GM12878 (cell line): ENCODE measurements at regions of chr7 and their contacts with region 1.

Region 1: DNA sequence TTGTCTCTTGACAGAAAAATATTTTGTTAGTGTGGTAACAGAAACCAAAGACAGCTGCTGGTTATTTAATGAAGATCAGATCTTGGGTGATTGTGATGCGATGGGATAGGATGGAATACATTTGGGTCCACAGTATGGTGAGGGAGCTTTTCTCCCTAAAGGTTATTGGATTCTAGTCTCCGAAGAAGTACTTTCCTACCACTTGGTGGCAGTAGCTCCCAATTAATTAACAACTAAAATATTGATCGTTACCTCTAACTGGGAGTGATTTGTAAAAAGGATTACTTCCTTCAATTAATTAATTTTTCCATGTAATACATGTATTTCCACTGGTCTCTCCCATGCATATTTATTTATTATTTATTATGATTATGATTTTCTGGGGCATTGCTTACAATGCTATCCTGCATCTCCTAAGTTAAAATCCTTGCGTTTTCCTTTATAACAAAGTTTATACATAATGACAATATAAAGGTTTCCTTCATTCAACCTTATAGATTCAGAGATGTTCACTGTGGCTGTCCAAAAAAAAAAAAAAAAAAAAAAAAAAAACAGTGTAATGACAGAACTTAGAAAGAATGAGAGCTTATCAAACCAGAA is 25.6 kb downstream of the TMEM196 start:
- DNase-seq: no peak
- ATAC-seq: peak; percentile 76
- H3K4me3 ChIP-seq: no peak overlapping the region
- H3K27ac ChIP-seq: no peak overlapping the region
- H3K4me1 ChIP-seq: no peaks in the 10 kb centered on the region
- H3K27me3 ChIP-seq: no peaks in the 10 kb centered on the region
- CTCF ChIP-seq: peak; percentile 47 to 61 (median 47); a peak in 5 of 6 replicates
- EP300 ChIP-seq: no peak
- POLR2A ChIP-seq: no peak
- RAD21 ChIP-seq: peak; percentile 63

Region 2: GRCh38 chr7:19708397-19709248 is 39.2 kb before region 1 on chr7 and contains the start of gene POLR1F:
- CTCF ChIA-PET with region 1: interaction called, 61 read pairs
- POLR2A ChIA-PET with region 1: no interaction called
- RAD21 ChIA-PET with region 1: interaction called, 23 read pairs
- SMC1A ChIA-PET with region 1: interaction called, 30 read pairs
- in situ Hi-C with region 1: no loop called
- intact Hi-C with region 1: no loop called
- DNase-seq: peak; percentile 90
- ATAC-seq: peak; percentile 95
- H3K4me3 ChIP-seq: peak within 1 kb of the TSS; percentile 90
- H3K27ac ChIP-seq: peak within 1 kb of the TSS; percentile 62
- H3K4me1 ChIP-seq: 0 out of 2 replicates have a peak, but pooled peaks cover 3% of the 10 kb centered on the region
- H3K27me3 ChIP-seq: no peaks in the 10 kb centered on the region
- CTCF ChIP-seq: peak; percentile 92 to 98 (median 97); a peak in 5 of 6 replicates
- EP300 ChIP-seq: 0 out of 4 replicates have a peak, but pooled peaks of 1 of the 2 experiments have one; percentile 33
- POLR2A ChIP-seq: peak; percentile 99
- RAD21 ChIP-seq: peak; percentile 59
- polyA plus RNA-seq, gene POLR1F: 95.3 to 129 TPM

Region 3: DNA sequence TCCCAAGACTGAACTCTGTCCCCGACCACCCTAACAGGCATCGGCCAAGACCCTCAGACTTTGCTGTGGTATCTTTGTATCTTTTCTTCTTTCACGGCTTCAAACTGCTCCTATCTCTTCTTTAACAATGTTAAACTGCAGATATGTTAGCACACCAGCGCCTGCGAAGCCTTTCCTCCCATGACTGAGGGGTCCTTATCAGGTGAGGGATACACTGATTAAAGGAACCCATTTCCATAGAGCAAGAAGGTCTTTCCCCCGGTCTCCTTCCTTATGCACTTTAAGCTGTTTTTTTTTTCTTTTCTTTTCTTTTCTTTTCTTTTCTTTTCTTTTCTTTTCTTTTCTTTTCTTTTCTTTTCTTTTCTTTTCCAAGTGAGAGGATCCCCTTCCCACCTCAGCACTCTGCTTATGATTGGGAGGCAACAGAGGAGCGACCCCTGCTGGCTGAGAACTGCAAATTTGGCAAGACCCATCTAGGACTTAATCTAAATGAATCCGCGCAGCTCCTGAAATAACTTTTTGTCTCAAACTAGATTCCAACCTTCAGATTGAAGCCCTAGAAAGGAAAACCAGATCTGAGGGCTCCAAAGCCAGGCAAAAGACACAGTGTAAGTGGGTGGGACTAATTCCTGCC is 692.7 kb after region 1 on chr7:
- CTCF ChIA-PET with region 1: interaction called, 6 read pairs
- POLR2A ChIA-PET with region 1: no interaction called
- RAD21 ChIA-PET with region 1: interaction called, 9 read pairs
- SMC1A ChIA-PET with region 1: interaction called, 3 read pairs
- in situ Hi-C with region 1: no loop called
- intact Hi-C with region 1: loop called (anchors 10 kb)
- DNase-seq: no peak
- ATAC-seq: peak; percentile 35; the same call in 1 of the 3 replicates
- H3K4me3 ChIP-seq: no peak overlapping the region
- H3K27ac ChIP-seq: no peak overlapping the region
- H3K4me1 ChIP-seq: peaks cover 15% of the 10 kb centered on the region; the same call in 1 of the 2 replicates
- H3K27me3 ChIP-seq: no peaks in the 10 kb centered on the region
- CTCF ChIP-seq: peak; percentile 34 to 65 (median 58)
- EP300 ChIP-seq: no peak
- POLR2A ChIP-seq: no peak
- RAD21 ChIP-seq: peak; percentile 60

Region 4: GRCh38 chr7:20598459-20599309 is 850.8 kb after region 1 on chr7:
- CTCF ChIA-PET with region 1: interaction called, 116 read pairs
- POLR2A ChIA-PET with region 1: no interaction called
- RAD21 ChIA-PET with region 1: interaction called, 86 read pairs
- SMC1A ChIA-PET with region 1: interaction called, 67 read pairs
- in situ Hi-C with region 1: loop called (anchors 5 kb)
- intact Hi-C with region 1: loop called (anchors 1 kb)
- DNase-seq: peak; percentile 43
- ATAC-seq: peak; percentile 88
- H3K4me3 ChIP-seq: no peak overlapping the region
- H3K27ac ChIP-seq: no peak overlapping the region
- H3K4me1 ChIP-seq: no peaks in the 10 kb centered on the region
- H3K27me3 ChIP-seq: no peaks in the 10 kb centered on the region
- CTCF ChIP-seq: peak; percentile 69 to 91 (median 84)
- EP300 ChIP-seq: no peak
- POLR2A ChIP-seq: no peak
- RAD21 ChIP-seq: peak; percentile 98

Region 5: GRCh38 chr7:20647908-20648776 is 900.3 kb after region 1 on chr7:
- CTCF ChIA-PET with region 1: interaction called, 24 read pairs
- POLR2A ChIA-PET with region 1: no interaction called
- RAD21 ChIA-PET with region 1: interaction called, 4 read pairs
- SMC1A ChIA-PET with region 1: interaction called, 3 read pairs
- in situ Hi-C with region 1: no loop called
- intact Hi-C with region 1: loop called (anchors 5 kb)
- DNase-seq: no peak
- ATAC-seq: peak; percentile 85
- H3K4me3 ChIP-seq: no peak overlapping the region
- H3K27ac ChIP-seq: no peak overlapping the region
- H3K4me1 ChIP-seq: no peaks in the 10 kb centered on the region
- H3K27me3 ChIP-seq: no peaks in the 10 kb centered on the region
- CTCF ChIP-seq: peak; percentile 44 to 54 (median 48); a peak in 5 of 6 replicates
- EP300 ChIP-seq: no peak
- POLR2A ChIP-seq: no peak
- RAD21 ChIP-seq: peak; percentile 31; the same call in 1 of the 2 replicates

Region 6: GRCh38 chr7:21243265-21243664 is 1495.4 kb after region 1 on chr7:
- CTCF ChIA-PET with region 1: no interaction called
- POLR2A ChIA-PET with region 1: no interaction called
- RAD21 ChIA-PET with region 1: no interaction called
- SMC1A ChIA-PET with region 1: no interaction called
- in situ Hi-C with region 1: loop called (anchors 10 kb)
- intact Hi-C with region 1: no loop called
- DNase-seq: no peak
- ATAC-seq: no peak
- H3K4me3 ChIP-seq: no peak overlapping the region
- H3K27ac ChIP-seq: no peak overlapping the region
- H3K4me1 ChIP-seq: no peaks in the 10 kb centered on the region
- H3K27me3 ChIP-seq: no peaks in the 10 kb centered on the region; a peak in 1 of 4 replicates
- CTCF ChIP-seq: no peak
- EP300 ChIP-seq: no peak
- POLR2A ChIP-seq: no peak
- RAD21 ChIP-seq: no peak